Caco-2 (cell line): ENCODE measurements at regions of chr5 and their contacts with region 1.

Region 1: GRCh38 chr5:76785487-76785886 is 33.3 kb upstream of the F2RL1 start:
- DNase-seq: peak; percentile 76 to 85
- H3K4me3 ChIP-seq: no peak overlapping the region
- H3K4me3 Mint-ChIP-seq: peak overlapping the region; percentile 48
- H3K27ac Mint-ChIP-seq: peak overlapping the region; percentile 87
- H3K4me1 ChIP-seq: peaks cover 35% of the 10 kb centered on the region
- H3K4me1 Mint-ChIP-seq: peaks cover 28% of the 10 kb centered on the region
- H3K27me3 ChIP-seq: no peaks in the 10 kb centered on the region
- H3K27me3 Mint-ChIP-seq: no peaks in the 10 kb centered on the region
- CTCF ChIP-seq: no peak

Region 2: GRCh38 chr5:76805850-76806505 is 20.5 kb after region 1 on chr5:
- CTCF ChIA-PET with region 1: no interaction called
- POLR2A ChIA-PET with region 1: no interaction called
- intact Hi-C with region 1: loop called (anchors 1 kb)
- DNase-seq: peak; percentile 76 to 77
- H3K4me3 ChIP-seq: peak overlapping the region; percentile 3; the same call in 1 of the 2 replicates
- H3K4me3 Mint-ChIP-seq: peak overlapping the region; percentile 47
- H3K27ac Mint-ChIP-seq: peak overlapping the region; percentile 80
- H3K4me1 ChIP-seq: peaks cover 58% of the 10 kb centered on the region
- H3K4me1 Mint-ChIP-seq: peaks cover 26% of the 10 kb centered on the region
- H3K27me3 ChIP-seq: no peaks in the 10 kb centered on the region
- H3K27me3 Mint-ChIP-seq: no peaks in the 10 kb centered on the region
- CTCF ChIP-seq: no peak

Region 3: GRCh38 chr5:76818844-76819831 is 33.7 kb after region 1 on chr5 and contains the start of gene F2RL1:
- CTCF ChIA-PET with region 1: no interaction called
- POLR2A ChIA-PET with region 1: interaction called, 6 read pairs
- intact Hi-C with region 1: loop called (anchors 1 kb)
- DNase-seq: peak; percentile 96 to 98
- H3K4me3 ChIP-seq: peak within 1 kb of the TSS; percentile 96
- H3K4me3 Mint-ChIP-seq: peak within 1 kb of the TSS; percentile 89
- H3K27ac Mint-ChIP-seq: peak within 1 kb of the TSS; percentile 95
- H3K4me1 ChIP-seq: peaks cover 40% of the 10 kb centered on the region
- H3K4me1 Mint-ChIP-seq: peaks cover 25% of the 10 kb centered on the region
- H3K27me3 ChIP-seq: no peaks in the 10 kb centered on the region
- H3K27me3 Mint-ChIP-seq: no peaks in the 10 kb centered on the region
- CTCF ChIP-seq: no peak
- total RNA-seq, gene F2RL1: 50.0 and 51.8 TPM in 2 replicates

Region 4: DNA sequence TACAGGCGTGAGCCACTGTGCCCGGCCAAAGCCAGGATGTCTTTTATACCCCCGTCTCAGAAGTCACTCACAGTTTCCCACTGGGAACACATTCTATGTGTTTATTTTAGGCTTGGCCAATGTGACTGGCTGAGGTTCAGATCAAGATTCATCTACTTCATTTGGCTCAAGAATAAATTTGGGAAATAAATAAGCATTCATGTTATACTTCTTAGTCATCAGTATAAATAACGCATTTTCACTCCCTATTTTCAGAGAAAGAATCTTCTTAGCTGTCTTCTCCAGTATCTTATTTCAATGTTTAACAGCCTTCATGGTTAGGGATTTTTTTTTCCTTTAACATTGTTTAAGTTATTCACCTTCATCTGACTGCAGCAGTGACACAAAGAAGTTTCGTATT is 76.1 kb after region 1 on chr5:
- CTCF ChIA-PET with region 1: no interaction called
- POLR2A ChIA-PET with region 1: no interaction called
- intact Hi-C with region 1: loop called (anchors 2 kb)
- DNase-seq: no peak
- H3K4me3 ChIP-seq: no peak overlapping the region
- H3K4me3 Mint-ChIP-seq: no peak overlapping the region
- H3K27ac Mint-ChIP-seq: no peak overlapping the region
- H3K4me1 ChIP-seq: peaks cover 11% of the 10 kb centered on the region
- H3K4me1 Mint-ChIP-seq: peaks cover 7% of the 10 kb centered on the region
- H3K27me3 ChIP-seq: no peaks in the 10 kb centered on the region
- H3K27me3 Mint-ChIP-seq: no peaks in the 10 kb centered on the region
- CTCF ChIP-seq: no peak

Region 5: DNA sequence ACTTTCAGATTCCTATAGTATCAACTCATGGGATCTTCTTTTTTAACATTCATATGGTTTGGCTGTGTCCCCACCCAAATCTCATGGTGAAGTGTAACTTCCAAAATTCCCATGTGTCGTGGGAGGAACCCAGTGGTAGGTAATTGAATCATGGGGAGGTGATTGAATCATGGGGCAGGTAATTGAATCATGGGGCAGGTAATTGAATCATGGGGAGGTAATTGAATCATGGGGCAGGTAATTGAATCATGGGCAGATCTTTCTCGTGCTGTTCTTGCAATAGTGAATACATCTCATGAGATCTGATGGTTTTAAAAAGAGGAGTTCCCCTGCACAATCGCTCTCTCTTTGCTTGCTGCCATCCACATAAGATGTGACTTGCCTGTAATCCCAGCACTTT is 222.9 kb after region 1 on chr5:
- CTCF ChIA-PET with region 1: no interaction called
- POLR2A ChIA-PET with region 1: interaction called, 12 read pairs
- intact Hi-C with region 1: no loop called
- DNase-seq: no peak
- H3K4me3 ChIP-seq: no peak overlapping the region
- H3K4me3 Mint-ChIP-seq: no peak overlapping the region
- H3K27ac Mint-ChIP-seq: no peak overlapping the region
- H3K4me1 ChIP-seq: no peaks in the 10 kb centered on the region
- H3K4me1 Mint-ChIP-seq: no peaks in the 10 kb centered on the region
- H3K27me3 ChIP-seq: peaks cover 2% of the 10 kb centered on the region
- H3K27me3 Mint-ChIP-seq: peaks cover 5% of the 10 kb centered on the region
- CTCF ChIP-seq: no peak